Psoas muscle (tissue), 8 donors: ENCODE measurements at regions of chrX and their contacts with region 1.

Region 1: GRCh38 chrX:46686003-46686645 is 72.8 kb downstream of the SLC9A7 start:
- DNase-seq: no peak
- ATAC-seq: no peak
- H3K4me3 ChIP-seq: no peak overlapping the region
- H3K27ac ChIP-seq: no peak overlapping the region
- H3K4me1 ChIP-seq: no peaks in the 10 kb centered on the region
- H3K27me3 ChIP-seq: no peaks in the 10 kb centered on the region
- CTCF ChIP-seq: peak; percentile 59

Region 2: DNA sequence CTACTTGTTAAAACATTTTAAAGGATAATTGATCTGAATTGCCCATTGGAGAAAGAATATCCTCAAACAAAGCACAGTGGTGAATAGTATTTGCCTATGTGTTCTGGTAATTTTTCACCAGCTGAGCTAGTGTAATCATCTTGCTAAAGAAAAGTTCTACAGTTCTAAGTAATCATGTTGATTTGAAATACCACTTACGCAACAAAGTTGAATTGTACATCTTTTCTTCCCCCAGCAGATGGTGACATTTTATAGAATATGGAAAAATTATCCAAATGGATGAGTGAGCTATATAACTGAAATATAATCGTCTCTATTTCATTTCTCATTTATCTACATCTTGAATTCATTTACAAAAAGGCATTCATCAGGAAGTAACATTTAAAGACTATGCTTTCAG is 131.2 kb before region 1 on chrX:
- intact Hi-C with region 1: loop called in 1 of 2 experiments (anchors 5 kb)
- DNase-seq: no peak
- ATAC-seq: no peak
- H3K4me3 ChIP-seq: no peak overlapping the region
- H3K27ac ChIP-seq: no peak overlapping the region
- H3K4me1 ChIP-seq: no peaks in the 10 kb centered on the region
- H3K27me3 ChIP-seq: no peaks in the 10 kb centered on the region
- CTCF ChIP-seq: peak; percentile 22

Region 3: GRCh38 chrX:46665232-46666152 is 20.6 kb before region 1 on chrX:
- intact Hi-C with region 1: no loop called
- DNase-seq: no peak
- ATAC-seq: no peak
- H3K4me3 ChIP-seq: no peak overlapping the region
- H3K27ac ChIP-seq: no peak overlapping the region
- H3K4me1 ChIP-seq: no peaks in the 10 kb centered on the region
- H3K27me3 ChIP-seq: no peaks in the 10 kb centered on the region
- CTCF ChIP-seq: no peak